ENCODE measurements at regions of chr1 and their contacts with region 1.

Region 1: GRCh38 chr1:234610348-234611152 is 572 bp upstream of the IRF2BP2 start:
- DNase-seq: peak; percentile 81

Region 2: DNA sequence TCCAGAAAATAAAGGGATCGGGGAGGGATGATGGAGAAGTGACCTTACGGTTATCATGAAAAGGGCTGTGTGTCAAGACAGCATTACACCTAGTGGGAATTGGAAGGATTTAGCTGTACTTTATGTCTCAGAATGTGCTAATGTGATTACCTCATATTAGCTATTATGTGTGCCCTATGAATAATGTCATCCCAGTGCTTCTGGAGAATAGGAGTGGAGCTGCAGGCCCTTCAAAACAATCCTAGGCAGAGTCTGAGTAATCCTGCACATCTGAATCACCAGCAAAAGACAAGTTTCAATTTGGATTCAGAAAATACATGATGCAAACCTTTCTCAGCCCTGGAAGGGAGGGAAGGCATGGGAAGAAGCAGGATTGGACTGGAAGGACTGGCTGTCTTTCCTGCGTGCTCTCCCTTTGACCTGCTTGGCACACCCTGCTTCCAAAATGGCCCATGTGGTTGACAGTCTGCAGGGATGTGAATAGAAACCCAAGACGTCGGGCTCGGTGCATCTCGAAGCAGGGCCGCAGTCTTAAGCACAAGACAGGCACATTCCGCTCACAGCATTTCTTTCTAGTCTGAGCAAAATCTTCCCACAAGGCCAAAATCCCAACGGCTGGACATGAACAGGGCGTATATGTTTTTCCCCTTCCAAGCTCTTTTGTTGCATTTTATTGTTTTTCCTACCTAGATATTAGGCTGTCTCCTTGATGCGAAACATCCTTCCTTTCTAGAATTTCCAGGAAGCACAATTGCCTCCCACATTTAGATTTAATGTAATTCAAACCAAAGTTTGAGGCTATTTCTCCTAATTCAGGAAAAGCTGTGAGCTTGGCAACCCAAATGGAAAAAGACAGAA is 77.3 kb before region 1 on chr1:
- CTCF ChIA-PET with region 1: no interaction called
- POLR2A ChIA-PET with region 1: interaction called, 41 read pairs
- DNase-seq: no peak

Region 3: DNA sequence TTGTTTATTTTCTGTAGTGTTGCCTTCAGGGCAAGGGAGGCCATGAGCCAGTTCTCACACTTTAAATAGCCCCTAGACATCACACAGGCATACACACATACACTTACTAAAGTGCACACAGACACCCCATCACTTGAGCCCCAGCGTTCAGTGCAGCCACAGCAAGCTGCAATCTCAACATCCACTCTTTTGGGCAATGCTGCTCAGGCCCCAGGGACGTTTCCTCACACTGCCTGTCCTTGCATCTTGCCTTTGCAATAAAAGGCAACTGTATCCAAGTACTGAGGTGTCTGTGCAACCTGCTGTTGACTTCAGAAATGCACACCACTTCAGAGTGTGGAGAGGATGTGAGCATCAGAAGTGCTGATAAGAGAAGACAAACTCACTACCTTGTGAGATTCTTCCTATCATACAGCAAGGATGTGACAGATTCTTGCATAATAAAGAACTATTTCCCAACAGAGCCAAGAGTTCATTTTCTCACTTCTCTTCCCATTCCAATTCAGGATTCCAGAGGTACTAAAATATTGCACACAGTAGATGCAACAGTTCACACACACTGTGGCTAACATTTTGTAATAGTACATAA is 36.7 kb before region 1 on chr1:
- CTCF ChIA-PET with region 1: no interaction called
- POLR2A ChIA-PET with region 1: no interaction called
- DNase-seq: no peak

Region 4: GRCh38 chr1:234621657-234622335 is 11.2 kb after region 1 on chr1:
- CTCF ChIA-PET with region 1: interaction called, 4 read pairs
- POLR2A ChIA-PET with region 1: interaction called, 34 read pairs
- DNase-seq: no peak

Region 5: DNA sequence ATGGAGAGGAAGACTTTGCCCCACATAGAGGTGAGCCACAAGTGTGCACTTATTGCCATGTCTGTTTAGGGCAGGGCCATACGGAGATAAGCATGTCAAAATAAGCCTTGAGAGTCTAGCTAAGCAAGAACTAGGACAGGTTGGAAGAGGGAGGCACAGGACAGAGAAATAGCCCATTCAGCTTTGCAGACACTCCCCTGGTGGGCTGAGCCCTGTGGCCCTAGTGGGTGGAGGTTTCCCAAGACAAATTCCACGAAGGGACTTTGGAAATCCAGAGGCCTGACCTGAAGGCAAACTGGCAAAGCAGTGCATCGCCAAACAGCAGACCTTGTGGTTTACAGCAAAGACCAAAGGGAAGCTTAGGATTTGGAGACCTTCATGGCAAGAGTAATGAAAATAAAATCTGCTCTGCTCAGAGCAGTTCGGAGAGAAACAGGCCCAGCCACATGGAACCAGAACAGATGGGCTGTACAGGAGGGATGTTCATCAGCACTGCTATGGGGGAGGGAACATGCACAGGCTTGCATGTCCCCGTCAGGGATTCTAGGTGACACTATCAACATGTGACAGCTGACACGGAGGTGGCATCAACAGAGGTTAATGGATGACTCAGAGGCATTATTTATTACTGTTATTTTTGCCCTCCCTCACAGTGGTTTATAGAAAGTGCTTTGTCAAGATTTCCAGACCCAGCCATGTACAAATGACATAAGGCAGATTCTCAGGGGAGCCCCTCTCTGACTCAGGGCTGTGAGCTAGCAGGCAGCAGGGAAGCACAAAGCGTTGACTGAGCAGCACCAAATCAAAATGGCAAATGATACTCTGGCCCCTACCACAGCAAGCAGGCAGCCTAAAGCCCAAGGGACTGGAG is 89.5 kb after region 1 on chr1:
- CTCF ChIA-PET with region 1: interaction called, 3 read pairs
- POLR2A ChIA-PET with region 1: interaction called, 71 read pairs
- DNase-seq: peak; percentile 56

Region 6: GRCh38 chr1:234743791-234744611 is 133.5 kb after region 1 on chr1:
- CTCF ChIA-PET with region 1: interaction called, 3 read pairs
- POLR2A ChIA-PET with region 1: interaction called, 38 read pairs
- DNase-seq: no peak

Measured in HEK293T (cell line).